CD8-positive, alpha-beta memory T cell (primary cell): ENCODE measurements at regions of chr17 and their contacts with region 1.

Region 1: GRCh38 chr17:7897773-7898172 is 9.2 kb downstream of the CHD3 start:
- DNase-seq: no peak
- H3K4me3 ChIP-seq: no peak overlapping the region
- H3K4me3 Mint-ChIP-seq: no peak overlapping the region
- H3K27ac ChIP-seq: no peak overlapping the region
- H3K27ac Mint-ChIP-seq: peak overlapping the region in 7 of 8 donors; percentile 12 to 70 (median 26)
- H3K4me1 ChIP-seq: no peaks in the 10 kb centered on the region
- H3K4me1 Mint-ChIP-seq: peaks cover 4 to 6% (median 5%) of the 10 kb centered on the region in 3 donors
- H3K27me3 ChIP-seq: no peaks in the 10 kb centered on the region
- H3K27me3 Mint-ChIP-seq: no peaks in the 10 kb centered on the region

Region 2: DNA sequence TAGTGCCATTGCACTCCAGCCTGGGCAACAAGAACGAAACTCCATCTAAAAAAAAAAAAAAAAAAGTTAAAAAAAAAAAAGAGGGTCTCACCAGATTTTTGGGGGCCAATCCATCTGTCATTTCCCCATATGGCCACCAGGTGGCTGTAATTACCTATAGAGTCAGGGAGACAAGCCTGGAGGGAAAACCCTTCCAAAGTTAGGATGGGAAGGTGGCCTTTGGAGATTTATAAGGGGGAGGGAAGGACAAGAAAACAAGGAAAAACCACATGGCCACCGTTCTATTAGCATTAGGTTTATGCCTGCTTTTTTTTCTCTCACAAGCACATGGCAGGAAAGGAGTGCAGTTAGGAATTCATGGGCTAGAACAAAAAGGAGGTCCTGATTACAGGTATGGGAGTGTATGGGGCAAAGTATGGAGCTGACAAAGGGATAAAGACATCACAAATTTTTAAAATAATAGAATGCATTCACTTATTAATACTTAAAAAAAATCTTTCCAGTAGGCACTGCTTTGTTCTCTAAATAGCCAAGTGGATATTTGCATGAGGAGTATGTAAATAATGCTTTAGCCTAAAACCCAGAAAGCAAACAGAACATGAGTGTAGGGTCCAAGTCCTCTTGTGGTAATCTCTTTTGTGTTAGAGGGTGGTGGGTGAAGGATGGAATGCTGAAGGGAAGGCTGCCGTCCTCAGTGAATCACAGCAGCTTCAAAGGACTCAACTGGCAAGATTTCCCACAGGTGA is 34.9 kb before region 1 on chr17:
- CTCF ChIA-PET with region 1: interaction called, 16 read pairs
- POLR2A ChIA-PET with region 1: interaction called, 7 read pairs
- DNase-seq: peak in 4 of 5 donors; percentile 49 to 70 (median 60)
- H3K4me3 ChIP-seq: no peak overlapping the region
- H3K4me3 Mint-ChIP-seq: no peak overlapping the region
- H3K27ac ChIP-seq: no peak overlapping the region
- H3K27ac Mint-ChIP-seq: peak overlapping the region in 3 of 8 donors; percentile 12 to 58 (median 40)
- H3K4me1 ChIP-seq: peaks cover 17% of the 10 kb centered on the region
- H3K4me1 Mint-ChIP-seq: peaks cover 17 to 18% (median 17%) of the 10 kb centered on the region in 3 donors
- H3K27me3 ChIP-seq: no peaks in the 10 kb centered on the region
- H3K27me3 Mint-ChIP-seq: no peaks in the 10 kb centered on the region